WTC11 (cell line): ENCODE measurements at regions of chr22 and their contacts with region 1.

Region 1: DNA sequence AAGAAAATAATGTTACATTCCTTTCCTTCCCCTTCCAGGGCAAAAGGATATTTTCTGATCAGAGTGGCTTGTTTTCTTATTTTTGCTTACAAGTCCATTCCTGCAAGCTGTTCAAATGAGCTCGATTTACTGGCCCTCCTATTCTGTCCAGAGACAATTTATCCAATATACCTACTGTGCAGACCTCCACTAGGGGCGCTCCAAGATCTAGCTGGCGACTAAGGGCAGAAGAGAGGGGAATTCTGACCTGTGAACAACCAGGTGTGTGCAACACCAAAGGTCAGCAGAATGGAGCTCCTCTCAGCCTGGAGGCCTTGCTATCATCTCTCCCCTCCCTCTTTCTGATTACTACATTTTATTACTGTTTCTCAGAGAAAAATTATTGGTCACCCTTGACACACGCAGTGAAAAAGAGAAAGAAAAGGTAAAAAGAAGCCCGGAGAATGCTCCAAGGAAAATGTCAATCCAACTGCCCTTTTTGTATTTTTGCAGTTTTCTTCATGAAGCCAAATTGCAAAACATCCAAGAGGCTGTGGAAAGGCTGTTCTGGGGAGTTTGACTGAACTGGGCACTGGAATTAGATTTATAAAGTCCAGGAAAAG is 3.2 kb downstream of the SEZ6L start:
- DNase-seq: peak; percentile 76
- ATAC-seq: peak; percentile 44
- H3K4me3 Mint-ChIP-seq: no peak overlapping the region
- H3K27ac Mint-ChIP-seq: no peak overlapping the region
- H3K4me1 Mint-ChIP-seq: peaks cover 34% of the 10 kb centered on the region
- H3K27me3 Mint-ChIP-seq: peaks cover 55% of the 10 kb centered on the region
- CTCF ChIP-seq: peak; percentile 67

Region 2: DNA sequence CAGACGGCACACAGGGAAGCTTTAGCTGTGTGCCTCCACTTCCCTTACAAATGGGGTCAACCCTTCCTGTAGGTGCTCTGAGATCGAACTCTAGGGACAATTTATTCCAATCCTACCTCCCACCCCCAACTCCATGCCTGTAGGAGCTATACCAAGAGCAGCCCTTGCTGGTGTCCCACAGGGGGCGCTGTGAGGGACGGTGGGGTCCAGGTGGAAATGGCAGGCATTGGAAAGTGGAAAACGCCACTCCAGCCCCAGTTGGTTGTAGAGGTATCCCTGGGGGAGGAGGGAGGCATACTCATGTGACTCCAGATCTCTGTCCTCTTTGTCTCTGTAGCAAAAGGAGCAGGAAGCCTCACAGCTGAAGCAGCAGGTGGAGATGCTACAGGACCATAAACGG is 269.2 kb before region 1 on chr22:
- CTCF ChIA-PET with region 1: interaction called, 22 read pairs
- POLR2A ChIA-PET with region 1: no interaction called
- DNase-seq: peak; percentile 85
- ATAC-seq: peak; percentile 94
- H3K4me3 Mint-ChIP-seq: no peak overlapping the region
- H3K27ac Mint-ChIP-seq: 0 out of 2 replicates have a peak overlapping the region, but pooled peaks have one; percentile 43
- H3K4me1 Mint-ChIP-seq: peaks cover 13% of the 10 kb centered on the region
- H3K27me3 Mint-ChIP-seq: peaks cover 3% of the 10 kb centered on the region
- CTCF ChIP-seq: peak; percentile 88

Region 3: GRCh38 chr22:26182723-26183122 is 10.2 kb after region 1 on chr22:
- CTCF ChIA-PET with region 1: interaction called, 10 read pairs
- POLR2A ChIA-PET with region 1: no interaction called
- DNase-seq: no peak
- ATAC-seq: no peak
- H3K4me3 Mint-ChIP-seq: no peak overlapping the region
- H3K27ac Mint-ChIP-seq: no peak overlapping the region
- H3K4me1 Mint-ChIP-seq: no peaks in the 10 kb centered on the region
- H3K27me3 Mint-ChIP-seq: no peaks in the 10 kb centered on the region; the same call in 1 of the 2 replicates
- CTCF ChIP-seq: no peak

Region 4: GRCh38 chr22:26259519-26259918 is 87.0 kb after region 1 on chr22:
- CTCF ChIA-PET with region 1: interaction called, 14 read pairs
- POLR2A ChIA-PET with region 1: no interaction called
- DNase-seq: peak; percentile 81
- ATAC-seq: peak; percentile 80
- H3K4me3 Mint-ChIP-seq: no peak overlapping the region
- H3K27ac Mint-ChIP-seq: no peak overlapping the region
- H3K4me1 Mint-ChIP-seq: peaks cover 6% of the 10 kb centered on the region
- H3K27me3 Mint-ChIP-seq: peaks cover 18% of the 10 kb centered on the region
- CTCF ChIP-seq: no peak

Region 5: GRCh38 chr22:26302726-26303125 is 130.2 kb after region 1 on chr22:
- CTCF ChIA-PET with region 1: interaction called, 13 read pairs
- POLR2A ChIA-PET with region 1: no interaction called
- DNase-seq: no peak
- ATAC-seq: no peak
- H3K4me3 Mint-ChIP-seq: no peak overlapping the region
- H3K27ac Mint-ChIP-seq: no peak overlapping the region
- H3K4me1 Mint-ChIP-seq: peaks cover 12% of the 10 kb centered on the region
- H3K27me3 Mint-ChIP-seq: no peaks in the 10 kb centered on the region
- CTCF ChIP-seq: no peak

Region 6: DNA sequence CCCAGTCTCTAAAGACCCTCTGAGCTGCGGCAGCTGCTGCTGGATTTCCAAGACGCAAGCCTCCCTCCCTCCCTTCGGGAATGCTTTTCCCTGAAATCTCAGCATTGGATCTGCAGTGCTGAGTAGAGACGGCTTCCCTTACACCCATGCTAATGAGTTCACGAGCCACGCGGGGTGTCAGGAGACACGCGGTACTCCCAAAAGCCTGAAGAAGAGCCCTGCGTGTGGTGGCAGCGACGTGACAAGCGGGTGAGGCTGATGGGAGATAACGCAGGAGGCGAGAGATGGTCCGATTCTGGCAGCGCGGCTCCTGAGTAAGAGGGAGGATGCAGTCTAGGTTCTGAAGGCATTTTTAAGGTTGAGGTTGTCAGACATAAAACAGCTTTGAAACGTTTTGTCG is 182.2 kb after region 1 on chr22:
- CTCF ChIA-PET with region 1: interaction called, 19 read pairs
- POLR2A ChIA-PET with region 1: no interaction called
- DNase-seq: no peak
- ATAC-seq: no peak
- H3K4me3 Mint-ChIP-seq: no peak overlapping the region
- H3K27ac Mint-ChIP-seq: no peak overlapping the region
- H3K4me1 Mint-ChIP-seq: no peaks in the 10 kb centered on the region
- H3K27me3 Mint-ChIP-seq: peaks cover 3% of the 10 kb centered on the region; the same call in 1 of the 2 replicates
- CTCF ChIP-seq: no peak